ENCODE measurements at regions of chr4 and their contacts with region 1.

Region 1: DNA sequence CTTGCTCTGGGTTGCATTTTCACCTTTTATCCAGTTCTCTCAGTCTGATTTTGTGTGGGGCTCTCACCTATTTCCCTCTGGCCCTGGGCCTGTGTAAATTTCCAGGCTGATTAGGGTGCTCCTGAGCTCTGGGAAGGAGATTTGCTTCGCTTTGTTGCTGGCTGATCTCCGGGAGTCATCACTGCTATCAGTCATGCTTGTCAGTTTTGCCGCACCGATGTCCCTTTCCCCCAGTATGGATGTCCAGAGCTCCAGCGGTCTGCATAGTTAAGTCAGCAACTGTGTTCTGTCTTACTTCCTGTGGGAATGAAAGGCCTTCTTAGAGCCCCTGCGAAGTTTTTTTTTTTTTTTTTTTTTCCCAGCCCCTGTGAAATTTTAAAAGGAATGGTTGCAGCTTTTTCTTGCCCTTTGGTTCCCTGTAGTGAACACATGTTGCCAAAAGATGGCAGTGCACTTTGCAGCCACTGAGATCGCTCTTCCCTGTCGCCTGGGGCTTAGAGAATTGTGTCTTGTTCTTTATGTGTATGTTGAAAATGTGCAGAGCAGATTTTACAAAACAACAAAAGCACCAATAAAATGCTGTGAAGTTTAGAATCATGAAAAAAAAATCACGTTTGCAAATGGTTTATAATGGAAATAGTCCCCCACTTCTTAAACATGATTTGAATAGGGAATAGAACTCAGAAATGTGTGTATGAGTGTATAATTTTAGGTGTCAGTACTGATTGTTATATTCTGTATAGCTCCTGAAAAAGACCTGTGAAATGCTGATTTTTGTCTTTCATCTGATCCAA is 109.1 kb upstream of the SLC4A4 start:
- DNase-seq: no peak
- ATAC-seq: peak; percentile 35 to 45

Region 2: DNA sequence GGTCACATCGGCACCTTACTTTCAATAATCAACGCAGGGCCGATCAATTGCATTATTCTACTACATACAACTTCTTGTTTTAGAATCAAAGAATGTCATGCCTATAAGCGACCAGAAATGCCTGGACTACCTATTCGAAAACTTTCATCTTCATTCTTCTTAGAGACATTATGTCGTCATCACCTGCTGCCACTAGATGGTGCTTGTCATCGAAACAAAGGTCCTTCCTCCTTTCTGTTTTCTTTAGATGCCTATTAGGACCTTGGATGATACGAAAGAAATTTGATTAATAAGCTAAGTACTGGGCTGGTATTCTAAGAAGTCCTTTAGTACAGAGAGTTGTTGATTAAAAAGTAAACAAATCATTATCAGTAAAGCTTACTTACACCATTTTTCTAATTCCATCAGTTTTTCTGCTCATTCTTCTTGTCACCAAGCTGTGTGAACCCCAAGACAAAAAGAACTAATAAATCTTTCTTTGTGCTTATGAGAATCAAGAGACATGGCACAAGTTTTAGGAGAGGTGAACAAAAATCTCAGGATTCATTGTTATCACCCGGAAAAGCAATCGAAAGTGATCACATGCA is 45.4 kb before region 1 on chr4:
- intact Hi-C with region 1: loop called in 1 of 2 experiments (anchors 2 kb)
- DNase-seq: peak; percentile 22
- ATAC-seq: no peak